Calu3 (cell line): ENCODE measurements at regions of chr3 and their contacts with region 1.

Region 1: GRCh38 chr3:143070977-143071551 is 48.5 kb upstream of the CHST2 start:
- DNase-seq: peak; percentile 35
- H3K4me3 Mint-ChIP-seq: no peak overlapping the region
- H3K27ac Mint-ChIP-seq: no peak overlapping the region
- H3K4me1 Mint-ChIP-seq: peaks cover 8% of the 10 kb centered on the region
- H3K27me3 Mint-ChIP-seq: no peaks in the 10 kb centered on the region
- CTCF ChIP-seq: no peak

Region 2: DNA sequence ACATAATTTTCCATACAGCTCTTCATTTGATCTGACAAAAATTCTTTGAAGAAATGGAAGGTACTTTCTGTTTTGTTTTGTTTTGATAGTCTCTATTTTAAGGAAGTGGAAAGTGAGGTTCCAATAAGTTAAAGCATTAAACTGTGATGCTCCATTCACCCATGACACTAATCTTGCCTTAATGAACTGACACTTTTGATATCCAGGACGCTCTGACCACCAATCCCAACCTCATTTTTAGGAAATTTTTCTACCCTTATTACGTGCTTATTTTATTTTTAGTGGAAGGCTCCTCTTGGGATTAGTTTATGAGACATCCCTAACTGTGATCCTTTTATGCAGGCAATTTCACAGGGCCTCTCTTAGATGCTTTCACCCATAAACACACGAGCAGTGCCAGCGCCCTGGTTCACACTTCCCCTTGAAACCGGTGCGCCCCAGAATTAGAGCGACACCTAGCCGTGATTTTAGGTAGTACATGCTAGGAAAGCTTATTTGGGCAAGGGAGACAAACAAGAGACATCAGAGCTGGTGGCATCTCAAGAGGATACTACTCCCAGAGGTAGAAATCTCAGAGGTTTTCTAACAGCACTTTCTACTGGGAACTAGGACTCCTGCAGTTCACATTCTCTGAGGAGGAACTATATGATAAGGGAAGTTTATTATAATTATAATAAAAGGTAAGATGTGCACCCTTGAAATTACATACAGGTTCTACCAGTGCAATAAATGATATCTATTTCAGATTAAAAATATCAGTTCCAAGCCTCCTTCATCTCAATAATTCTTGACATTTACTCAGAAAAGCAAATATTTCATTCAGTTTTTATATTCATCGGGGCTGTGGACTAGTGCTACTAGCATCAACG is 603.3 kb after region 1 on chr3:
- CTCF ChIA-PET with region 1: interaction called, 17 read pairs
- intact Hi-C with region 1: loop called (anchors 5 kb)
- DNase-seq: peak; percentile 88
- H3K4me3 Mint-ChIP-seq: peak overlapping the region; percentile 22
- H3K27ac Mint-ChIP-seq: no peak overlapping the region
- H3K4me1 Mint-ChIP-seq: peaks cover 6% of the 10 kb centered on the region
- H3K27me3 Mint-ChIP-seq: peaks cover 24% of the 10 kb centered on the region
- CTCF ChIP-seq: peak; percentile 96

Region 3: GRCh38 chr3:143763564-143764162 is 692.6 kb after region 1 on chr3:
- CTCF ChIA-PET with region 1: no interaction called
- intact Hi-C with region 1: loop called (anchors 2 kb)
- DNase-seq: no peak
- H3K4me3 Mint-ChIP-seq: no peak overlapping the region
- H3K27ac Mint-ChIP-seq: no peak overlapping the region
- H3K4me1 Mint-ChIP-seq: no peaks in the 10 kb centered on the region
- H3K27me3 Mint-ChIP-seq: no peaks in the 10 kb centered on the region
- CTCF ChIP-seq: no peak